HEK293 (cell line): ENCODE measurements at regions of chr22 and their contacts with region 1.

Region 1: DNA sequence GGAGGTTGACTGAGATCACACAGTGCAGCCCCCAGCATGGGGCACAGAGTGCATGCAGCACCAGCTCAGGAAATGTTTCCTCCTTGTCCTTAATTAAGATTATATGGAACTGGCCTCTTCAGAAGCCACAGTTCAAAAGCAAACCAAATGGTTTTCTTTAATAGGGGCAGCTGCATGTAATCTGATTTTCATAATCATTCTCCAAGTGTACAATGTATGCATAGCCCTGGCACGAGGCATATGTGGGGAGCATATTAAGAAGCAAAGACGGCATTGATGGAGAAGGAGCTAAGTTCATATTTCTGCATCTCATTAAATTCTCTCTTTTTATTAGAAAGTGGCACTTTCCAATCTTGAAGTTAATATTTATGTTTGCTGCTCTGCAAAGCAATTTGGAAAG is 9.9 kb upstream of the PARVB start:
- H3K4me3 ChIP-seq: no peak overlapping the region
- H3K27ac ChIP-seq: no peak overlapping the region
- H3K4me1 ChIP-seq: no peaks in the 10 kb centered on the region
- CTCF ChIP-seq: no peak

Region 2: GRCh38 chr22:42261296-42261695 is 1752.9 kb before region 1 on chr22:
- CTCF ChIA-PET with region 1: interaction called, 12 read pairs
- POLR2A ChIA-PET with region 1: no interaction called
- H3K4me3 ChIP-seq: no peak overlapping the region
- H3K27ac ChIP-seq: no peak overlapping the region
- H3K4me1 ChIP-seq: peaks cover 27% of the 10 kb centered on the region
- CTCF ChIP-seq: no peak

Region 3: DNA sequence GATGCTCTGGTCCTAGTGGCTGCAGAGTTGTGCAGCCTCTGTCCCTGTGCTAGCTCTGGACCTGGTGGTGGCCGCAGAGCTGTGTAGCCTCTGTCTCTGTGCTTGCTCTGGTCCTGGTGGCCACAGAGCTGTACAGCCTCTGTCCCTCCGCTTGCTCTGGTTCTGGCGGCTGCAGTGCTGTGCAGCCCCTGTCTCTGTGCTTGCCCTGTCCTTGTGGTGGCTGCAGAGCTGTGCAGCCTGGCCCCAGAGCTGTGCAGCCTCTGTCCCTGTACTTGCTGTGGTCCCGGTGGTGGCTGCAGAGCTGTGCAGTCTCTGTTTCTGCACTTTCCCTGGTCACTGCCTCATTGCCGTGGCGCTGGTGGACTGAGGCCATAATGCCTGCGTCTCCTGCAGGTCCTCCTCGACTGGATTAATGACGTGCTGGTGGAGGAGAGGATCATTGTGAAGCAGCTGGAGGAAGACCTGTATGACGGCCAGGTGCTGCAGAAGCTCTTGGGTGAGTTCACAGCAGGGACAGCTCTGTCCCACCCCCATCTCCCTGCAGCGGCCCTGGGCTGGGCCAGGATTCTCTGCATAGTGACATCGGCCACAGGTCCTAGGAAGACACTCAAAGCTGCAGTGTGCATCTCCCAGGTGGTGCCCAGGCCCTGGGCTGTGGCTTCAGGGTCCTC is 104.5 kb after region 1 on chr22:
- CTCF ChIA-PET with region 1: no interaction called
- POLR2A ChIA-PET with region 1: no interaction called
- H3K4me3 ChIP-seq: no peak overlapping the region
- H3K27ac ChIP-seq: no peak overlapping the region
- H3K4me1 ChIP-seq: no peaks in the 10 kb centered on the region
- CTCF ChIP-seq: no peak